Adrenal gland (tissue), 19 donors: ENCODE measurements at regions of chr5 and their contacts with region 1.

Region 1: GRCh38 chr5:35926389-35927051 is 11.9 kb downstream of the CAPSL start:
- DNase-seq: peak; percentile 26 to 73 (median 55)
- H3K4me3 ChIP-seq: no peak overlapping the region
- H3K27ac ChIP-seq: no peak overlapping the region
- H3K4me1 ChIP-seq: peaks cover 0 to 6% of the 10 kb centered on the region in 2 donors
- H3K27me3 ChIP-seq: no peaks in the 10 kb centered on the region
- CTCF ChIP-seq: peak; percentile 75 to 96 (median 86)
- POLR2A ChIP-seq: no peak

Region 2: GRCh38 chr5:35089334-35090314 is 836.9 kb before region 1 on chr5:
- intact Hi-C with region 1: loop called in 1 of 2 experiments (anchors 10 kb)
- DNase-seq: peak; percentile 46 to 81 (median 67)
- H3K4me3 ChIP-seq: no peak overlapping the region
- H3K27ac ChIP-seq: no peak overlapping the region
- H3K4me1 ChIP-seq: peaks cover 0 to 4% of the 10 kb centered on the region in 2 donors
- H3K27me3 ChIP-seq: no peaks in the 10 kb centered on the region
- CTCF ChIP-seq: peak; percentile 53 to 78 (median 76)
- POLR2A ChIP-seq: no peak

Region 3: GRCh38 chr5:35281613-35282012 is 644.9 kb before region 1 on chr5:
- intact Hi-C with region 1: no loop called
- DNase-seq: no peak
- H3K4me3 ChIP-seq: no peak overlapping the region
- H3K27ac ChIP-seq: no peak overlapping the region
- H3K4me1 ChIP-seq: no peaks in the 10 kb centered on the region
- H3K27me3 ChIP-seq: no peaks in the 10 kb centered on the region
- CTCF ChIP-seq: no peak
- POLR2A ChIP-seq: no peak

Region 4: GRCh38 chr5:35617435-35618303 is 308.9 kb before region 1 on chr5 and contains the start of gene SPEF2:
- intact Hi-C with region 1: loop called in 1 of 2 experiments (anchors 2 kb)
- DNase-seq: peak; percentile 80 to 94 (median 89)
- H3K4me3 ChIP-seq: peak within 1 kb of the TSS; percentile 71 to 86 (median 78)
- H3K27ac ChIP-seq: peak within 1 kb of the TSS in 1 of 5 donors; percentile 42
- H3K4me1 ChIP-seq: no peaks in the 10 kb centered on the region
- H3K27me3 ChIP-seq: no peaks in the 10 kb centered on the region
- CTCF ChIP-seq: peak; percentile 62 to 84 (median 82)
- POLR2A ChIP-seq: no peak
- total RNA-seq, gene SPEF2: 3.3 to 19.7 (median 9.3) TPM

Region 5: GRCh38 chr5:35651002-35651756 is 275.3 kb before region 1 on chr5:
- intact Hi-C with region 1: loop called in 1 of 2 experiments (anchors 5 kb)
- DNase-seq: peak; percentile 22 to 62 (median 23)
- H3K4me3 ChIP-seq: no peak overlapping the region
- H3K27ac ChIP-seq: no peak overlapping the region
- H3K4me1 ChIP-seq: no peaks in the 10 kb centered on the region
- H3K27me3 ChIP-seq: no peaks in the 10 kb centered on the region
- CTCF ChIP-seq: peak in 4 of 6 experiments; percentile 39 to 51 (median 46)
- POLR2A ChIP-seq: no peak

Region 6: GRCh38 chr5:35777358-35778087 is 149.0 kb before region 1 on chr5:
- intact Hi-C with region 1: loop called in 1 of 2 experiments (anchors 5 kb)
- DNase-seq: peak; percentile 68 to 89 (median 82)
- H3K4me3 ChIP-seq: no peak overlapping the region
- H3K27ac ChIP-seq: no peak overlapping the region
- H3K4me1 ChIP-seq: no peaks in the 10 kb centered on the region
- H3K27me3 ChIP-seq: no peaks in the 10 kb centered on the region
- CTCF ChIP-seq: peak; percentile 49 to 76 (median 71)
- POLR2A ChIP-seq: no peak